IMR-90 (cell line): ENCODE measurements at regions of chr2 and their contacts with region 1.

Region 1: GRCh38 chr2:226835796-226836547 is at the start of gene RHBDD1:
- DNase-seq: peak; percentile 95
- ATAC-seq: peak; percentile 96
- H3K4me3 ChIP-seq: peak within 1 kb of the TSS; percentile 55
- H3K27ac ChIP-seq: peak within 1 kb of the TSS; percentile 83
- H3K4me1 ChIP-seq: peaks cover 2% of the 10 kb centered on the region; the same call in 1 of the 2 replicates
- H3K27me3 ChIP-seq: no peaks in the 10 kb centered on the region
- CTCF ChIP-seq: no peak
- POLR2A ChIP-seq: peak; percentile 92
- RAD21 ChIP-seq: no peak
- total RNA-seq, gene RHBDD1: 11.9 and 14.0 TPM in 2 replicates

Region 2: DNA sequence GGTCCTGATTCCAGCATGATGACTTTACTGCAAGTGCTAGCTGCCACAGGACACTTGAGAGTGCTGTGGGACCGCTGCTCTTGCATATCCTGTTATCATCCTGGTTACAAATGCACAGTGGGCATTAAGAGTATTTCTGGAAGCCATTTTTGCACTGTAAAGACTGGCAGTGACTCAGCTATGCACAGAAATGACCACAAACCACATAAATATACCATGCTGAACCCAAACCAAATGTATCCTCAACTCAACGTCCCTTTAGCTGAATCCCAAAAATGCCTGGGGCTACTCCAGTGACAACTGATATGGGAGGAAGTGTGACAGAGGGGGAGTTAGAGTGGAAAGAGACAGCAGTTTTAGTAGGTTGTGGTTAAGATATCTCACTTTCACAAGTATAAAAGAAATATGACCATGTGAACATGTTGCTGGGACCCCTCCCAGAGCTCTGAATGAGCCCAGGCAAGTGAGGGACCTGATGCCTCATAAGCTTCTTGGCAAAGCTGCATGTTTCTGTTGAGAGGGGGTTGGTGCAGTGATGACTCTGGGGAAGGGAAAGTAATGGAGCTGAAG is 37.2 kb after region 1 on chr2:
- CTCF ChIA-PET with region 1: no interaction called
- POLR2A ChIA-PET with region 1: no interaction called
- dilution Hi-C with region 1: no loop called
- in situ Hi-C with region 1: no loop called
- intact Hi-C with region 1: loop called (anchors 5 kb)
- DNase-seq: peak; percentile 59
- ATAC-seq: peak; percentile 71
- H3K4me3 ChIP-seq: no peak overlapping the region
- H3K27ac ChIP-seq: no peak overlapping the region
- H3K4me1 ChIP-seq: peaks cover under 1% of the 10 kb centered on the region; the same call in 1 of the 2 replicates
- H3K27me3 ChIP-seq: no peaks in the 10 kb centered on the region
- CTCF ChIP-seq: peak; percentile 22; the same call in 1 of the 2 replicates
- POLR2A ChIP-seq: no peak
- RAD21 ChIP-seq: peak; percentile 41

Region 3: DNA sequence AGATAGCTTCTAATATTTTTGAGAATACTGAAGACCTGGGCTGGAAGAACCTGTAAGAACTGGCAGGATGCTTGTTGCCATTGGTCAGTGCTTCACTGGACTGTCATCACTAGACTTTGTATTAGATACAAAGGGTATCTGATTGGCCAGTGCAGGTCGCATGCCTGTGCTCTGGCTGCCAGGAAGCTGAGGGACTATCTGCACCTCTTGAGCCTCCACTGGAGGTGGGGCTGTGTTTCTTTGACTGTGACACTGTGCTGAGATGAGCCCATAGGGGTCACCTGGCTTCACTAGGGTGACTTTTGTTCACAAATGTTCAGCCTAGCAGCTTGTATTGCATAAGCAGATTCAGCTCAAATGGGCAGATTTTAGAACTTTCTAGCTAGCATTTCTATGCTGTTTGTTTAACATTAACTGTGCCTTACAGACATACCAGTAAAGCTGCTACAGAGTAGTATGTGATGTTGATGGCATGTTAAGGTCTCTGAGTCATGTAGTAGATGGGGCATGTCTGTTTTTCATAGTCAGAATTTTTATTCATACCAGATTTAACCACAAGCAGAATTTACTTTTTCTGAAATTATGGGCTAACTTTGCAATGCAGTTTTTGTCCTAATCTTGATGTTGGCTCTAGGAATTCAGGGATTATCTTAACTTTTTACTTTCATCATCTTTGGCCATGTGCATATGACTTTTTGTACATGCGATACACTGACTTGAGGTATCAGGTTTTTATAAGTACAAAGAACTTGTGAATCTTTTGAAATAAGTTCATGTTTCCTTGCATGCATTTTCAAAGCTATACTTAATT is 56.0 kb after region 1 on chr2:
- CTCF ChIA-PET with region 1: no interaction called
- POLR2A ChIA-PET with region 1: no interaction called
- dilution Hi-C with region 1: no loop called
- in situ Hi-C with region 1: no loop called
- intact Hi-C with region 1: loop called (anchors 5 kb)
- DNase-seq: peak; percentile 92
- ATAC-seq: peak; percentile 90
- H3K4me3 ChIP-seq: no peak overlapping the region
- H3K27ac ChIP-seq: peak overlapping the region; percentile 75
- H3K4me1 ChIP-seq: peaks cover 9% of the 10 kb centered on the region
- H3K27me3 ChIP-seq: no peaks in the 10 kb centered on the region
- CTCF ChIP-seq: no peak
- POLR2A ChIP-seq: no peak
- RAD21 ChIP-seq: no peak